Brain microvascular endothelial cell (primary cell): ENCODE measurements at regions of chr9 and their contacts with region 1.

Region 1: GRCh38 chr9:129333953-129334724 is 156.1 kb upstream of the IER5L start:
- DNase-seq: peak; percentile 90
- H3K4me3 ChIP-seq: no peak overlapping the region
- H3K27ac ChIP-seq: peak overlapping the region; percentile 45
- H3K27me3 ChIP-seq: no peaks in the 10 kb centered on the region
- CTCF ChIP-seq: no peak

Region 2: DNA sequence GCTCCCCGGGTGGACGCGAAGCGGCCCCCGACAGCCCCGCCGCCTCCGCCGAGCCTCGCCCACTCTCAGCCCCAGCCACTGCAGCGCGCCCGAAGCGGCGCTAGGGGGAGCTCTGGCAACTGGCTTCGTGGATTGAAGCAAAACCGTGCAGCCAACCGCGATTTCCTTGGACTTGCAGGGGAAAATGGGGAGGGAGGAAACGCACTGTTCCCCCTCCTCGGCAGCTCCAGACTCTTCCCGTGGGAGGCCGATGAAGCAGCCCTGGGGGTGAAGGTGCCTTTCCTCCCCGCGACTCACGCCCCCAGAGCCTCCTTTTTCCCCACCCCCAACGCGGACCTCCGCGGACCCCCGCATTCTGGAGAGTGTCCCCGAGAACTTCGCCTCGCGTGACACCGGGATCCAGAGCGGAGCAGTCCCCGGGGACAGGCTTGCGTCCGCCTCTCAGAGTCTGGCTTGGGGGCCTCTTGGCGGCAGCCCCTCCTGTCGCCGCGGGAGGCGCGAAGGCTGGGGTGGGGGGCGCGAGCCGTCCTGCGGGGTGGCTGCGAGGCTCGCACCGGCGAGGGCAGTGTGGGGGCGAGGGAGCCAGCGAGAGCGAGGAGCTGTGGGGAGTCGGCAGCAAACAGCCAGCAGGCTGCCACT is 159.9 kb before region 1 on chr9:
- in situ Hi-C with region 1: loop called (anchors 25 kb)
- DNase-seq: peak; percentile 84
- H3K4me3 ChIP-seq: peak overlapping the region; percentile 94
- H3K27ac ChIP-seq: peak overlapping the region; percentile 97
- H3K27me3 ChIP-seq: no peaks in the 10 kb centered on the region
- CTCF ChIP-seq: peak; percentile 89

Region 3: GRCh38 chr9:129225815-129226214 is 108.3 kb before region 1 on chr9:
- in situ Hi-C with region 1: no loop called
- DNase-seq: peak; percentile 79
- H3K4me3 ChIP-seq: no peak overlapping the region
- H3K27ac ChIP-seq: no peak overlapping the region
- H3K27me3 ChIP-seq: no peaks in the 10 kb centered on the region
- CTCF ChIP-seq: no peak

Region 4: DNA sequence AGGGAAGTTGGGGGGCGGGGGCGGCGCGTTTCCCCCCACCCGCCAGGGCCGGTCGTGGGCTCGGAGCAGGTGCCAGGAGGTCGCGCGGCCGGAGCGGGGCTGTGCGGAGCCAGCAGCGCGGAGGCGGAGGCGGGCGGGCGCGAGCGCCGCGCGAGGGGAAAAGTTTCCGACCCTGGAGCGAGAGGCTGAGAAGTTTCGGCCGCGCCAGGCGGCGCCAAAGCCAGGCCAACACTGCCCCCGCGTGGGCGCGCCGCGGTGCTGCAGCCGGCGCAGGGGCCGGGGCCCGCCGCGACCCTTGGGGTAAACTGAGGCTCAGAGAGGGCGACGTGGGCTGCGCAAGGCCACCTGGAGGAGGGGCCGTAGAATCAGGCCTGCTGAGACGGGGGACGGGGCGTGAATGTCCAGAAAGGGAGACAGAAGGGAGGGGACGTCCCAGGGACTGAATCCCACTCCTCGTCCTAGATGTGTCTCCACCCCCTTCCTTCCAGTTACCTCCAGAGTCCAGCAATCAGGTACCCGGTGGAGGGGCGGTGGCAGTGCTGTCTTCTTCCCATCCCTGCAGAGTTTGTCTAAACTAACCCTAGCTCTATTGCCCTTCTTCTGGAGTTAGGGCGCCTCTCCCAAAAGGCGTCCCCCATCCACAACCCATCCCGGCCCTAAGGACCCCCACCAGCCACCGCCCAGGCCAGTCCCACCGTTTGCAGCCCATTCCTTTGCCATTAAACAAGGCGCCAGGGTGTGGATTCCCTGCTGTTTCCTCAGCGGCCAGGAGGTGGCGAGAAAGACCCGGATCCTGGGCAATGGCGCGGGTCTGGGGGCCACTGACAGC is 276.5 kb after region 1 on chr9:
- in situ Hi-C with region 1: loop called (anchors 25 kb)
- DNase-seq: peak; percentile 56
- H3K4me3 ChIP-seq: peak overlapping the region; percentile 57
- H3K27ac ChIP-seq: peak overlapping the region; percentile 50
- H3K27me3 ChIP-seq: no peaks in the 10 kb centered on the region
- CTCF ChIP-seq: peak; percentile 89